PC-3 (cell line): ENCODE measurements at regions of chr17 and their contacts with region 1.

Region 1: GRCh38 chr17:32828822-32829221 is 48.1 kb downstream of the MYO1D start:
- DNase-seq: no peak
- ATAC-seq: peak; percentile 11
- H3K4me3 ChIP-seq: peak overlapping the region; percentile 55; the same call in 1 of the 2 replicates
- H3K27ac ChIP-seq: no peak overlapping the region
- H3K4me1 ChIP-seq: peaks cover 12% of the 10 kb centered on the region
- H3K27me3 ChIP-seq: no peaks in the 10 kb centered on the region
- CTCF ChIP-seq: no peak

Region 2: GRCh38 chr17:32862940-32863339 is 34.1 kb after region 1 on chr17:
- CTCF ChIA-PET with region 1: no interaction called
- POLR2A ChIA-PET with region 1: interaction called, 21 read pairs
- intact Hi-C with region 1: no loop called
- DNase-seq: peak; percentile 19
- ATAC-seq: no peak
- H3K4me3 ChIP-seq: no peak overlapping the region
- H3K27ac ChIP-seq: no peak overlapping the region
- H3K4me1 ChIP-seq: no peaks in the 10 kb centered on the region; the same call in 1 of the 2 replicates
- H3K27me3 ChIP-seq: no peaks in the 10 kb centered on the region
- CTCF ChIP-seq: no peak

Region 3: DNA sequence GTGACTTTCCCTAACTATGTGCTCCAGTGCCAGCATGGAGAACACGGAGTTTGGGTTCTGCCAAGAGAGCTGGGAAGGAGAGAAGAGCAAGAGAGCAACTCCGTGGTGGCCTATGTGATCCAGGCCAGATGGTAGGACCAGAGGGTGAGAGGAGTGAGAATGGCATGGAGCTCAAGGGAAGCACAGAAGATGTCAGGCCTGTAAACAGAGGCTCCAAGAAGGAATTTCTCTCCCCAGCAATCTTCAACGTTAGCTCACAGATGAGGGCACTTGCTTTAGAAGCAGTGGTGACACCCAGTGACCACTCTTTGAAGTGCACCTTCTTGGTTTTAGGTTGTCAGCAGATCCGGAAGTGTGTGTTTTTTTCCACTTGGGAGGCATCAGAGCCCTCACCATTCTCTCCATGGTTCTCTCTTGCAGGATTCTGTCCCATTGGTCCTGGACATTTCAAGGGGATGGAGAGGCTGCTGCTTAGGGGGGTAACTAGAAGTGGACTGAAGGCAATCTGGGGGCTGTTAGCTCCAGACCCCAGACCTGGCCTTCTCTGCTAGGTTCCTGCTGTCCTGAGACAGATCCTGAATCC is 81.1 kb after region 1 on chr17:
- CTCF ChIA-PET with region 1: no interaction called
- POLR2A ChIA-PET with region 1: interaction called, 21 read pairs
- intact Hi-C with region 1: no loop called
- DNase-seq: peak; percentile 74
- ATAC-seq: peak; percentile 54
- H3K4me3 ChIP-seq: no peak overlapping the region
- H3K27ac ChIP-seq: no peak overlapping the region
- H3K4me1 ChIP-seq: peaks cover 12% of the 10 kb centered on the region
- H3K27me3 ChIP-seq: no peaks in the 10 kb centered on the region
- CTCF ChIP-seq: peak; percentile 66